ENCODE measurements at regions of chr9 and their contacts with region 1.

Region 1: DNA sequence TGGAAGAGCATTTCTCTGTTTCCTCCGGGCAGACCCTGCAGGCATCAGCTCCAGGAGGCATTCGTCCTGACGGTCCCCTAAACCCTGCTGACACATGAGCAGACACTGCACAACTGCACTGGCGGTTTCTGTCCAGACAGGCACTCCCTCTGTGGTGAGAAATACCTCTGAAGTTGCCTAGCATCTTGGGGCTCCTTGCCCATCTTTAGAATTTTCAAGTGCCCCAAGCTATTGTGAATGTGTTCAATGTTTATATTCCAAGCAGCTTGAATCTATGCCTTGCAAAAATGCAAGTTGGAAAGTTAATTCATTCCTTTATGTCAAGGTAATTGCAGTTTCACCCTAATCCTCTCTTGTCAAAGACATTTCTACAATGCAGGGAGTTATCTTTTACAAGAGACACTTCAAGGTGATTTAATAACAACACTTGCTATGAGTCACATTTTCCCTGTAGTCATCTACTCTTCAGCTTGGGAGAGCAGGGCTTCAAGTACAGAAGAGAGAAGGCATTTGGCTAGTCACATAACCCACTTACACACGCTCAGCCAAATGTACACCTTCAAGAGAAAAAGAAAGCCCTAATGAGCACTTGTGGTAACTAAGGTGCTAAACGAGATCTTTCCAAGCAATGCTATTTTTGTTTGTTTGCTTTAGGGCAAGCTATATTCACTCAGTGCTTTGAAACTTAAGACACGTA is 302.5 kb downstream of the MLLT3 start:
- DNase-seq: peak; percentile 53
- H3K4me3 Mint-ChIP-seq: no peak overlapping the region
- H3K27ac Mint-ChIP-seq: peak overlapping the region; percentile 50
- H3K4me1 Mint-ChIP-seq: peaks cover 41% of the 10 kb centered on the region
- H3K27me3 Mint-ChIP-seq: no peaks in the 10 kb centered on the region
- CTCF ChIP-seq: no peak

Region 2: GRCh38 chr9:19946441-19947109 is 373.2 kb before region 1 on chr9:
- CTCF ChIA-PET with region 1: interaction called, 13 read pairs
- POLR2A ChIA-PET with region 1: no interaction called
- intact Hi-C with region 1: no loop called
- DNase-seq: peak; percentile 11
- H3K4me3 Mint-ChIP-seq: no peak overlapping the region
- H3K27ac Mint-ChIP-seq: no peak overlapping the region
- H3K4me1 Mint-ChIP-seq: no peaks in the 10 kb centered on the region
- H3K27me3 Mint-ChIP-seq: peaks cover 16% of the 10 kb centered on the region
- CTCF ChIP-seq: peak; percentile 28

Region 3: DNA sequence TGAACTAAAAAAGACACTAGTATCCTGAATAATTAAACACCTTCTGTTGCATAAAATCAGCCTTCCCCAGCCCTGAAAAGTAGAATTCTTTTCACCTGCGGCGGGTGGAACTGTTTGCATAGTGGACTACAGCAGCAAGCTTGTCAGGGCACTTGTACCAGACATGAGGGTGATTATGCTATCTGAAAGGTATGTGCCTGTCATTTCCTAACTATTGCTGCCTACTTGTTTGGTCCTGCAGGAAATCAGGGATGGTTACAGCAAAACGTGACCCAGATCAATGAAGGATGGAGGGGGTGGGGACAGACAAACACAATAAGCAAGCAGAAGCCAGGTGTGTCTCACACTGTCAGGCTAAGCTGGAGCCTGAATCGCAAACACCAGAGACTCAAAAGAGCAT is 83.1 kb before region 1 on chr9:
- CTCF ChIA-PET with region 1: interaction called, 4 read pairs
- POLR2A ChIA-PET with region 1: interaction called, 12 read pairs
- intact Hi-C with region 1: no loop called
- DNase-seq: peak; percentile 15
- H3K4me3 Mint-ChIP-seq: no peak overlapping the region
- H3K27ac Mint-ChIP-seq: peak overlapping the region; percentile 66
- H3K4me1 Mint-ChIP-seq: peaks cover 15% of the 10 kb centered on the region
- H3K27me3 Mint-ChIP-seq: no peaks in the 10 kb centered on the region
- CTCF ChIP-seq: no peak

Region 4: GRCh38 chr9:20297646-20298084 is 22.1 kb before region 1 on chr9:
- CTCF ChIA-PET with region 1: no interaction called
- POLR2A ChIA-PET with region 1: no interaction called
- intact Hi-C with region 1: no loop called
- DNase-seq: no peak
- H3K4me3 Mint-ChIP-seq: no peak overlapping the region
- H3K27ac Mint-ChIP-seq: peak overlapping the region; percentile 14
- H3K4me1 Mint-ChIP-seq: peaks cover 6% of the 10 kb centered on the region
- H3K27me3 Mint-ChIP-seq: no peaks in the 10 kb centered on the region
- CTCF ChIP-seq: no peak

Measured in MCF 10A (cell line).